ENCODE measurements at regions of chr5 and their contacts with region 1.

Region 1: DNA sequence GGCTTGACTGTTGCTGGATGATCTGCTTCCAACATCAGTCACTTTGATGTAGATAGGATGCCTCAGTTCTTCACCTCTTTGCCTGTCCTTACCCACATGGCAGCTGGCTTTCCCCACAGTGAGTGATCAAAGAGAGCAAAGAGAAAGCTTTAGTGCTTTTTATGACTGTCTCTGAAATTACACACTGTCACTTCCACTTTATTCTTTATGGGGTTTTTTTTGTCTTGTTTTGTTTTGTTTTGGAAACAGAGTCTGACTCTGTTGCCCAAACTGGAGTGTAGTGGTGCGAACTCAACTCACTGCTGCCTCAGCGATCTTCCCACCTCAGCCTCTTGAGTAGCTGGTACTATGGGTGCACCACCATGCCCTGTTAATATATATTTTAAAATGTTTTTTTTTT is 32.4 kb upstream of the C5orf24 start:
- DNase-seq: no peak
- ATAC-seq: no peak
- H3K4me3 ChIP-seq: no peak overlapping the region
- H3K27ac ChIP-seq: no peak overlapping the region
- H3K4me1 ChIP-seq: no peaks in the 10 kb centered on the region
- H3K27me3 ChIP-seq: no peaks in the 10 kb centered on the region
- CTCF ChIP-seq: no peak
- POLR2A ChIP-seq: no peak
- RAD21 ChIP-seq: no peak

Region 2: DNA sequence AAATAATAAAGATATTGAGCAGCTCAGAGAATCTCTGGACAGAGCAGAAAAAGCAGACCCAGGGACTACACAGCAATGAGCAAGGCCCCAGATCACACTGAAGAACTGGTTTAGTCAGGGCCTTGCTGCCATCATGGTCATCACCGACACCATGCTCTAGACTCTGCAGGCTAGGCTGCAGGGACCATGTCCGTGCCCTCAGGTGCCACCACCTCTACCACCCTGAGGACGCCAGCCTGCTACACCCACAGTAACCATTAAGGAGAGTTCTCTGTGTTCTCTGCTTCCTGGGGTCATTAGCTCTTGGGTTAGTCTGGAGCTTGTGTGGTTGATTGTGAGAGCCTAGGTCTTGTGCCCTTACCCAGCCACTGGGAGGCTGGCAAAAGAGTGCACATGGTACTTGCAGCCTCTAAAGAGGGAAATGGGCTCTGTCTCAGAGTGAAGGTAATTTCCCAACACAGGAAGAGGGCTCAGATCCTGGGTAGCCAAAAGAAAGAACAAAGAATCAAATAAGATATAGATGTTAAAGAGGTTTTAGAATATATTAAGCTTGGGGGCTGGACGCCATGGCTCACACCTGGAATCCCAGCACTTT is 319.8 kb before region 1 on chr5:
- CTCF ChIA-PET with region 1: no interaction called
- POLR2A ChIA-PET with region 1: no interaction called
- RAD21 ChIA-PET with region 1: no interaction called
- intact Hi-C with region 1: no loop called
- DNase-seq: no peak
- ATAC-seq: no peak
- H3K4me3 ChIP-seq: no peak overlapping the region
- H3K27ac ChIP-seq: no peak overlapping the region
- H3K4me1 ChIP-seq: peaks cover 3 to 9% of the 10 kb centered on the region in 2 experiments; a peak in 3 of 4 replicates
- H3K27me3 ChIP-seq: no peaks in the 10 kb centered on the region
- CTCF ChIP-seq: no peak
- POLR2A ChIP-seq: no peak
- RAD21 ChIP-seq: no peak

Region 3: DNA sequence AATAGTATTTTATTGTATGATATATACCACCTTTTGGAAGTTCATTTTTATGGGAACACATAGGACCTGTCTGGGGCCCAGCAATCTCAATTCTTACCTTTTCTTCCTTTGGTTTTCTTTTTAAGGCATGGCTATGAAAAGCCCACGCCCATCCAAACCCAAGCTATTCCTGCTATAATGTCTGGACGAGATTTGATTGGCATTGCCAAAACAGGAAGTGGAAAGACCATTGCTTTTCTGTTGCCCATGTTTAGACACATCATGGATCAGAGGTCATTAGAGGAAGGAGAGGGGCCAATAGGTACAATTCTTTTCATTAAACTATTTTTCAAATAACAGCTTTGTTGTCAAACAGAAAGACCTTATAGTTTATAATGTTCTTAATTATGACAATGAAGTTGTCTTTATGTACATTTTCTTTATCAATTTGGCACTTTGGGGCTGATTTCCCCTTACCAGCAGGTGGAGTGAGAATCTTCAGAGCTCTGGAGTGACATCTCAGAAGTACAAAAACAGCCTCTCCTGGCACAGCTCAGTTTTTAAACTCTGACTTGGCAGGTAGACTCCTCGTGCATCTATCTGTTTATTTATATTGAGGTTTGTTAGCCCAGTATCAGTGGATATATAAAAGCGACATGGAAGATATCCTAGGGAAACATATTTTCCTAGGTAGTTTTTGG is 29.0 kb before region 1 on chr5:
- CTCF ChIA-PET with region 1: no interaction called
- POLR2A ChIA-PET with region 1: no interaction called
- RAD21 ChIA-PET with region 1: no interaction called
- intact Hi-C with region 1: no loop called
- DNase-seq: no peak
- ATAC-seq: no peak
- H3K4me3 ChIP-seq: no peak overlapping the region
- H3K27ac ChIP-seq: no peak overlapping the region
- H3K4me1 ChIP-seq: no peaks in the 10 kb centered on the region
- H3K27me3 ChIP-seq: no peaks in the 10 kb centered on the region
- CTCF ChIP-seq: peak in 2 of 3 experiments; percentile 28 to 33; a peak in 2 of 6 replicates
- POLR2A ChIP-seq: no peak
- RAD21 ChIP-seq: peak; percentile 24; the same call in 1 of the 2 replicates

Region 4: DNA sequence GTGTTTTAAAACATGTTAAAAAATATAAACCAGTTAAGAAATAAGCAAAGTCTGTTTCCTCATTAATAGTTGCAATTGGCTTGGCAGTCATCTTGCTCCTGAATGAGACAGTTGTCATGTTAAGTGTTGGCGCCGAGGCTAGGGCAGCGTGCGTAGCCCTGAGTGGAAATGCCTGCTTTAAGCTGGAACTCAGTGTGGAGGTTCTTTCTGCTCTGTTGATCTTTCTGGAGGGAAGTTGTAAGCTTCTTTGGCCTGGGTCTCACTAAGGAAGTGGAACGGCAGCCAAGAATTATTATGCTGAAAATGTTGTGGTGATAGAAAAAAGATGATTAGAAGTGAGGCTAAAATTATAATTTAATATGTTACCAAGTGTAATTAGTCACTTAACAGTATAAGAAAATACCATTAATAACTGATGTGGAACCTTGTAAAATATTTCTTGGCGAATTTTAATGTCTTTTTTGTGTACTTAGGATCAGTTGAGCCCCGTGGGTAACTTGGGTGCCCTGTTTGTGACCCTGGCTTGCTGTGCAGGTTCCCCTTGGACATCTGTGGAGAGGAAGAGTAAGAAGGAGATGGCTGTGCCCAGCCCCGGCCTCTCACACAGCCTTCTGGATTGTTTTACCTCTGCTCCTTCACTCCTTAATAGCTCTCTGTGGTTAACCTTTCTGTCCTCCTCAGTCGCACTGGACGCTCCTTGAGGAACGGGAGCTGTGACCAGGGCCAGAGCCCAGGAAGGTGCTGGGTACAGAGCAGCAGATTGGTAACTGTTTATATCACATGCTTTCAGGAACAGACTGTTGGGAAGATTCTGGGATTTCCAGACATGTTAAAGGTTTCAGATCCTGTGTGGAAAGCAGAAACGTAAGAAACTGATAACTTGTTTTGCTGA is 122.5 kb after region 1 on chr5:
- CTCF ChIA-PET with region 1: no interaction called
- POLR2A ChIA-PET with region 1: no interaction called
- RAD21 ChIA-PET with region 1: no interaction called
- intact Hi-C with region 1: no loop called
- DNase-seq: no peak
- ATAC-seq: no peak
- H3K4me3 ChIP-seq: no peak overlapping the region
- H3K27ac ChIP-seq: no peak overlapping the region
- H3K4me1 ChIP-seq: no peaks in the 10 kb centered on the region
- H3K27me3 ChIP-seq: no peaks in the 10 kb centered on the region
- CTCF ChIP-seq: no peak
- POLR2A ChIP-seq: no peak
- RAD21 ChIP-seq: no peak

Region 5: GRCh38 chr5:135343413-135343812 is 530.0 kb after region 1 on chr5:
- CTCF ChIA-PET with region 1: no interaction called
- POLR2A ChIA-PET with region 1: no interaction called
- RAD21 ChIA-PET with region 1: no interaction called
- intact Hi-C with region 1: loop called (anchors 5 kb)
- DNase-seq: no peak
- ATAC-seq: no peak
- H3K4me3 ChIP-seq: no peak overlapping the region
- H3K27ac ChIP-seq: no peak overlapping the region
- H3K4me1 ChIP-seq: no peaks in the 10 kb centered on the region
- H3K27me3 ChIP-seq: no peaks in the 10 kb centered on the region
- CTCF ChIP-seq: no peak
- POLR2A ChIP-seq: no peak
- RAD21 ChIP-seq: no peak

Region 6: DNA sequence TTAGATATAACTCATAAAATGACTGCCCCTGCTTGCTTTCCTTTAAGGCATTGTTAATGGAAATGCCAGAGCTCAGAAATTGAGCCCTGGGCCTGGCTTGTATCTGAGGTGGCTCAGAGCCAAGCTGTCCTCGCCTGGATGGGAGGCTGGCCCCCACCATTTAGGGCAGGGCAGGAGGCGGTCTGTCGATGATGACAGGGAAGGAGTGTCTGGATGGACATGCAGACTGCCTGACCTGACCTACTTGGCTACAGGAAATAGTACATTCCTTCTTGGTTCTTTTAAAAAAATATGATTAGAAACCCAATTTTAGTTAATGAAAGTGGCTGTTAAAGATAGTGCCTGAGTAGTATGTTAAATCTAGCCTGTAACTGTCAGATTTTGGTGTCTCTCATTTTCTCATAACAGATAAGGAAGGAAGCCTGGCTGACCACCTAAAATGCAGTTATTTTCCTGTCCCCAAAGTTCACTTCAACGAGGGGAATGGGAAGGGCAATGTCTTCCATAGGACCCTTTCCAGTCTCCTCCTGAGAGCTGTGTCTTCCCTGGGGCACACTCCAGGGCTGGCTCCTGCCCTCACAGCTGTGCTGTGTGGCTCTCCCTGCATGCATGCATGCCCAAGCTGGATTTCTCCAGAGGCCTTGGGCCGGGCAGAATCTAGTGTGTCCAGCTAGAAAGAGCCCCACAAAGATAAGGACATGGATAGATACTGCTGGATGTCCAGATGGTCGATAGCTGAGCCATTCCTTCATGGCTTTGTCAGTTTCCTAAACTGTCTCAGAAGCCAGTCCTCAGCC is 543.3 kb after region 1 on chr5:
- CTCF ChIA-PET with region 1: no interaction called
- POLR2A ChIA-PET with region 1: no interaction called
- RAD21 ChIA-PET with region 1: no interaction called
- intact Hi-C with region 1: no loop called
- DNase-seq: no peak
- ATAC-seq: no peak
- H3K4me3 ChIP-seq: no peak overlapping the region
- H3K27ac ChIP-seq: no peak overlapping the region
- H3K4me1 ChIP-seq: no peaks in the 10 kb centered on the region
- H3K27me3 ChIP-seq: no peaks in the 10 kb centered on the region
- CTCF ChIP-seq: no peak
- POLR2A ChIP-seq: no peak
- RAD21 ChIP-seq: no peak